Naive thymus-derived CD8-positive, alpha-beta T cell (primary cell): ENCODE measurements at regions of chr19 and their contacts with region 1.

Region 1: GRCh38 chr19:49533551-49534488 is 6.0 kb downstream of the RCN3 start:
- DNase-seq: peak; percentile 73 to 97 (median 87)
- ATAC-seq: peak; percentile 92 to 93
- H3K4me3 Mint-ChIP-seq: peak overlapping the region; percentile 77 to 93 (median 88)
- H3K27ac Mint-ChIP-seq: peak overlapping the region in 8 of 10 donors; percentile 48 to 91 (median 80)
- H3K4me1 Mint-ChIP-seq: peaks cover 16 to 28% (median 25%) of the 10 kb centered on the region in 4 donors
- H3K27me3 Mint-ChIP-seq: no peaks in the 10 kb centered on the region

Region 2: DNA sequence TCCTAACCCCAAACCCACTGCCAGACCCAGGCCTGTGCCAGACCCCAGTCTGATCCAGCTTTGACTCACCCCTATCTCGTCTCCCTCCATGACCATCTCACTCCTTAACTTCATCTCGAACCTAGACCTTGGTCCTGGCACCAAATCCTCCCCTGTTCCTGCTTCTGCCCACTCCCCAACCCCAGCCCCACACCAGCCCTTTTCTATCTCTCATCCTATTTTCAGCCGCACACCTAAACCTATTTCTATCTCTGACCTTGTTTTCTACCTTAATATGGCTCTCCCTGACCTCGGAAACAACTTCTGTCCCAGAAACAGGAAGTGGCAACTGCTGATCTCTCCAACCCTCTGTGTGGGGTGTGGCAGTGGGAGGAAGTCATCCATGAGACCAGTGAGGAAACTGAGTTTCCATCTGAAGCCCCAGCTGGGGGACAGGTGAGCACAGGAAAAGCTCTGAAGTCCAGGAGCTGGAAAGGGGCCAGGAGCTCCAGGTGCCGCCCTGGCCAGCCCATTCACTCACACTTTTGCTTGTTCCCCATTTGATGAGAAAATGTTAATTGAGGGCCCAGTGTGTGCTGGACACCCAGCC is 124.3 kb before region 1 on chr19:
- POLR2A ChIA-PET with region 1: no interaction called
- DNase-seq: no peak
- ATAC-seq: peak; percentile 53 to 69
- H3K4me3 Mint-ChIP-seq: peak overlapping the region; percentile 39 to 87 (median 68)
- H3K27ac Mint-ChIP-seq: peak overlapping the region; percentile 56 to 92 (median 88)
- H3K4me1 Mint-ChIP-seq: peaks cover 35 to 57% (median 55%) of the 10 kb centered on the region in 4 donors
- H3K27me3 Mint-ChIP-seq: no peaks in the 10 kb centered on the region

Region 3: GRCh38 chr19:49481020-49481683 is 52.7 kb before region 1 on chr19:
- POLR2A ChIA-PET with region 1: no interaction called
- DNase-seq: no peak
- ATAC-seq: no peak
- H3K4me3 Mint-ChIP-seq: peak overlapping the region in 5 of 10 donors; percentile 5 to 76 (median 26)
- H3K27ac Mint-ChIP-seq: peak overlapping the region; percentile 55 to 89 (median 70)
- H3K4me1 Mint-ChIP-seq: peaks cover 13 to 59% (median 29%) of the 10 kb centered on the region in 4 donors
- H3K27me3 Mint-ChIP-seq: no peaks in the 10 kb centered on the region

Region 4: DNA sequence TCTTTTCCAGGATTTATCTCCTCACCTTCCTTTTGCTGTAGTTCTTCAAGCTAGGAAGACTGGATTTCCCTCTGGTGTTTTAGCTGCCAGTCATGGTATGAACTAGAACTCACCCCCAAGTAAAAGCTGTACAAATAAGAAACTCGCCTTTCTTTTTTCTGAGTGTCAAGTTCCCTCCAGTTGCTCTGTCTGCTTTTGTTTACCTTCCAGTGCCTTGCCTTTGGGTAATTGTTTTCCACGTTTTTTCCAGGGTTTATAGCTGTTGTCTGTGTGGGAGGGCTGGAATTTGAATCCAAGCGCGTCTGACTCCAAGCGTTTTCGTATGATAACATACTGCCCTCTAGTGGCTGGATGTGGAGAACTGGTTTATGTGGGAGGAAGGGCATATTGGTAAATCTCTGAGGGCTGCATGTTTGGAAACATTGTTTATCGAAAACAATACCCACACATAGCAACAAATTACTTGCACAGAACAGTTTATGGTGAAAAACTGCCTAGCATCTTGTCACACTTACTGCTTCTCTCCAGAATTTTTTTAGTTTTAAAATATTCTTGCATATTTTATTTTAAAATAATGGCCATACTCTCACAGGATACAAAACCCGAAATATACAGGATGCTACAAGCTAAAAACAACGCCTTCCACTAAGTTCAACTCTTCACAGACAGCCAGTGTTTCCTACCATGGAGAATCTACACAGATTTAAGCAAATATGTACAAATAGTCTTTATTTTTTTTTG is 13.2 kb after region 1 on chr19:
- POLR2A ChIA-PET with region 1: interaction called, 23 read pairs
- DNase-seq: peak in 9 of 10 donors; percentile 49 to 87 (median 68)
- ATAC-seq: peak; percentile 75 to 81
- H3K4me3 Mint-ChIP-seq: peak overlapping the region; percentile 62 to 84 (median 78)
- H3K27ac Mint-ChIP-seq: peak overlapping the region; percentile 56 to 86 (median 82)
- H3K4me1 Mint-ChIP-seq: peaks cover 27 to 58% (median 49%) of the 10 kb centered on the region in 4 donors
- H3K27me3 Mint-ChIP-seq: no peaks in the 10 kb centered on the region

Region 5: DNA sequence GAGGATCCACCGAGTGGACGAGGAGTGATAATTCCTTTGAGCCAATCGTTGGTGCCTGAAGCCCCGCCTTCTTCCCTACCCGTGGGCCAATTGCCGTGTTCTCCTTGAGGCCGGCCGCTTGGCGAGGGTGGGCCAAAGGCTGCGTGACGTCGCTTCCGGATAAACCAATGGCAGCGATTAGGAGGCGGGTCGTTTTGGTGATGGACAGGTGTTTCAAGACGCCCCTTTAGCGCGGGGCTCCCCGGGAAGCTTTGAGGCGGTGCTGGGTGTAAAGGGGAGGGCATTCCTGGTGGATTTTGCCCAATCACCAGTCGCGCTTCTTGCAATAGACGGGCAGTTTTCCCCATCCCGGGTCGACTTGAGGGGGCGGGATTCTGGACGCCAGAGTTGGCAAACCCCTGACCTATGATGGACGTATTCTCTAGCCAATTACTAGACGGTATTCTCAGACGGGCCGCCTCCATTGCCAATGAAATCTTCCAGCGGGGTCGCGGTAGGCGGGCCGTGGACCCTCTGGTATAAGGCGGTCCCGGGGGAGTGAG is 142.9 kb after region 1 on chr19:
- POLR2A ChIA-PET with region 1: no interaction called
- DNase-seq: peak; percentile 91 to 100 (median 98)
- ATAC-seq: peak; percentile 74 to 76
- H3K4me3 Mint-ChIP-seq: peak overlapping the region; percentile 89 to 100 (median 98)
- H3K27ac Mint-ChIP-seq: peak overlapping the region; percentile 84 to 100 (median 98)
- H3K4me1 Mint-ChIP-seq: peaks cover 32 to 55% (median 44%) of the 10 kb centered on the region in 4 donors
- H3K27me3 Mint-ChIP-seq: no peaks in the 10 kb centered on the region